Activated CD4-positive, alpha-beta memory T cell treated with anti-CD3 and anti-CD28 coated beads for 36 hours (primary cell): ENCODE measurements at regions of chr6 and their contacts with region 1.

Region 1: GRCh38 chr6:2791124-2791974 is 26.2 kb downstream of the WRNIP1 start:
- DNase-seq: peak; percentile 82
- H3K4me3 Mint-ChIP-seq: no peak overlapping the region
- H3K27ac Mint-ChIP-seq: no peak overlapping the region
- H3K4me1 Mint-ChIP-seq: peaks cover 34% of the 10 kb centered on the region
- H3K27me3 Mint-ChIP-seq: no peaks in the 10 kb centered on the region

Region 2: GRCh38 chr6:2706558-2706957 is 84.8 kb before region 1 on chr6:
- CTCF ChIA-PET with region 1: no interaction called
- POLR2A ChIA-PET with region 1: no interaction called
- intact Hi-C with region 1: no loop called
- DNase-seq: no peak
- H3K4me3 Mint-ChIP-seq: no peak overlapping the region
- H3K27ac Mint-ChIP-seq: no peak overlapping the region
- H3K4me1 Mint-ChIP-seq: no peaks in the 10 kb centered on the region
- H3K27me3 Mint-ChIP-seq: peaks cover 18% of the 10 kb centered on the region

Region 3: GRCh38 chr6:2810092-2810671 is 18.8 kb after region 1 on chr6:
- CTCF ChIA-PET with region 1: interaction called, 3 read pairs
- POLR2A ChIA-PET with region 1: no interaction called
- intact Hi-C with region 1: loop called (anchors 1 kb)
- DNase-seq: peak; percentile 23
- H3K4me3 Mint-ChIP-seq: no peak overlapping the region
- H3K27ac Mint-ChIP-seq: peak overlapping the region; percentile 11
- H3K4me1 Mint-ChIP-seq: peaks cover 12% of the 10 kb centered on the region
- H3K27me3 Mint-ChIP-seq: no peaks in the 10 kb centered on the region

Region 4: DNA sequence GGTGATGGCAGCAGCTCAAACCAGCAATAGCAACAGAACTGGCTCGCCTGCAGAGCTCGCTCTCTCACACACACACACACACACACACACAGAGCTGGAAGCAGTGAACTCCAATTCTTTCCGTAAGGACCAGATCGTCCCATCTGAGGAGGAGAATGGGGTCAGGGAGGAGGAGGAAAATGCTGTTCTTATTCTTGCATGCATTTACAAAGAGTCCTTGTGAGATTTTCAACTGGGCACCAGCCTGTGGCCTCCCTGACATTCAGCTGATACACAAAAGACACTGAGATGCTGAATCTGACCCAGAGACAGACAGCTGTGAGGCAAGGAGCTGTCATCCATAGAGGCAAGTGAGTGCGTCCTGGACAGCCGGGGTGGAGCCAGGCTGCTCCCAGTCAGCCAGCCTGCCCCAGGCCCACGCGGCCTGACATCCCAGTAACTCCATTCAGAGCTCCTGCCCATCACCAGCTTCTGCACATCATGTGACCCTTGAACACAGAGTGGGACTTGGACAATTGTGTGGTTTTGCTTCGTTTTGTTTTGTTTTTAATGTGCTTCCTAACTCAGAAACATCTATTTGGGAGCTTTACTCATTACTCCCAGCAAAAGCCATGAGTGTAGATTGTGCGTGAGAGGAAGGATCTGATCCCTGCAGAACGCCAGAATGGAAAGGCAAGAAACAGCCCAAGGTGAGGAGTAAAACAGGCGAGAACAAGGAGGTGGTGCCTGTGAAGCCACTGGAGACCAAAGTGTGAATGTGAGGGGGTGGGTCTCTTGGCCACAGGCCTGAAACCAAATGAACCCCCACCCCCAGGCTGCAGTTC is 109.7 kb after region 1 on chr6:
- CTCF ChIA-PET with region 1: interaction called, 19 read pairs
- POLR2A ChIA-PET with region 1: no interaction called
- intact Hi-C with region 1: no loop called
- DNase-seq: no peak
- H3K4me3 Mint-ChIP-seq: peak overlapping the region; percentile 99
- H3K27ac Mint-ChIP-seq: peak overlapping the region; percentile 95
- H3K4me1 Mint-ChIP-seq: peaks cover 41% of the 10 kb centered on the region
- H3K27me3 Mint-ChIP-seq: no peaks in the 10 kb centered on the region

Region 5: GRCh38 chr6:2931970-2932748 is 140.8 kb after region 1 on chr6:
- CTCF ChIA-PET with region 1: interaction called, 47 read pairs
- POLR2A ChIA-PET with region 1: no interaction called
- intact Hi-C with region 1: loop called (anchors 1 kb)
- DNase-seq: peak; percentile 93
- H3K4me3 Mint-ChIP-seq: peak overlapping the region; percentile 28
- H3K27ac Mint-ChIP-seq: peak overlapping the region; percentile 77
- H3K4me1 Mint-ChIP-seq: peaks cover 26% of the 10 kb centered on the region
- H3K27me3 Mint-ChIP-seq: no peaks in the 10 kb centered on the region

Region 6: DNA sequence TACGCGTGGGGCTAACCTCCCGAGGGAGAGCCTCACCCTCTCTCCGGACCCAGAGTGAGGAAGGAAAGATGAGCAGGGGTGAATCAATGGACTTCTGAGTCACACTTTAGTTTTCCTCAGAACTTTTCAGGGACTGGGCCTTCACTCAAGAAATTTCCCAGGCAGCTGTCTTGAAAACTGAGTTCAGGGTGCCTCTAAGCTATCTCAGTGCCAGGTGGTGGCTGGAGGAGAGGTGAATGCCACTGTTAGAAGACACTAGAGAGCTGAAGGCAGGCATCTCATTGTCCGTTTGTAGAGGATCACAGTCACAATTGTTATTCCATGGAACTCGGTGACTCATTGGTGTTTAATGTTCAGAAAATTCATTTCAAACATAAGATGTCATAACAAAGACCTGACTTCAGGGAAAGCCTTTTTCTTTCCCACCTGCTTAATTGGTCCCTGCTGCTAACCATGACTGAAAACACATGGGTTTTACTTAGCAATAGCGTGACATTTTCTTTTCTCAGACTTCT is 185.3 kb after region 1 on chr6:
- CTCF ChIA-PET with region 1: interaction called, 3 read pairs
- POLR2A ChIA-PET with region 1: no interaction called
- intact Hi-C with region 1: loop called (anchors 1 kb)
- DNase-seq: peak; percentile 33
- H3K4me3 Mint-ChIP-seq: no peak overlapping the region
- H3K27ac Mint-ChIP-seq: peak overlapping the region; percentile 88
- H3K4me1 Mint-ChIP-seq: peaks cover 40% of the 10 kb centered on the region
- H3K27me3 Mint-ChIP-seq: peaks cover 8% of the 10 kb centered on the region